Posterior vena cava (tissue), 2 donors: ENCODE measurements at regions of chr18 and their contacts with region 1.

Region 1: GRCh38 chr18:48951448-48952286 is 902 bp upstream of the SMAD7 start:
- DNase-seq: peak; percentile 95

Region 2: GRCh38 chr18:48675352-48675761 is 276.3 kb before region 1 on chr18:
- intact Hi-C with region 1: loop called (anchors 5 to 10 kb)
- DNase-seq: peak; percentile 96

Region 3: DNA sequence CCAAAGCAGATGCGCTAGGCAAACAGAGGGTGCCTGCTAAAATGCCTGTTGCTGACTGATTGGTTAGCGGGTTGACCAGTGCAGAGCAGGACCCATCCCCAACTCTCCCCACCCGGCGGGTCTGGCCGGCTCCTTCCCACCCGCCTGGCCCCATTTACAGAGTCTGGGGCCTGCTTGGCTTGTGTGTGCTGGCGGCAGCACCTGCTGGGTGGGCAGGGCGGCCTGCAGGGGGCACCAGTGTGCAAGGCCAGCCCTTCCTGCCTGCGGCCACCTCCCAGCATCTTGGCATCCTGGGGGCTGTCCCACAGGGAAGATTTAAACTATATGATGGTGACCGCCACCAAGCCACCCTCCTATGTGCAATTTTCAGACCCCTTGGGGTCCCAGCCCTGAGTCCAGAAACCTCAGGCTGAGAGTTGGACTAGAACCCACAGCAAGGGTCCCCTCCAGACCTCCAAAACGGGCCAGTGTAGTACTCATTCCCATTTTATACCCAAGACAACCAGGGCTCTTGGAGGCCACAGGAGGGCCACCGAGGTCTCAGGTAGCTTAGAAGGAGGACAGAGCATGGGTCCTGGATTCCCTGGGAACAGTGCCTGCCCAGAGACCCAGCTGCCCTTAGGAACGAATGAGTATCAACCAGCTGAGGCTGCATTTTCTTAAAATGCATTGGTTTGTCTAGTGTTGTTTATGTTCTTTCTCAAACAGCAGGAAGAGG is 174.5 kb before region 1 on chr18:
- intact Hi-C with region 1: loop called (anchors 5 to 10 kb)
- DNase-seq: peak; percentile 88

Region 4: DNA sequence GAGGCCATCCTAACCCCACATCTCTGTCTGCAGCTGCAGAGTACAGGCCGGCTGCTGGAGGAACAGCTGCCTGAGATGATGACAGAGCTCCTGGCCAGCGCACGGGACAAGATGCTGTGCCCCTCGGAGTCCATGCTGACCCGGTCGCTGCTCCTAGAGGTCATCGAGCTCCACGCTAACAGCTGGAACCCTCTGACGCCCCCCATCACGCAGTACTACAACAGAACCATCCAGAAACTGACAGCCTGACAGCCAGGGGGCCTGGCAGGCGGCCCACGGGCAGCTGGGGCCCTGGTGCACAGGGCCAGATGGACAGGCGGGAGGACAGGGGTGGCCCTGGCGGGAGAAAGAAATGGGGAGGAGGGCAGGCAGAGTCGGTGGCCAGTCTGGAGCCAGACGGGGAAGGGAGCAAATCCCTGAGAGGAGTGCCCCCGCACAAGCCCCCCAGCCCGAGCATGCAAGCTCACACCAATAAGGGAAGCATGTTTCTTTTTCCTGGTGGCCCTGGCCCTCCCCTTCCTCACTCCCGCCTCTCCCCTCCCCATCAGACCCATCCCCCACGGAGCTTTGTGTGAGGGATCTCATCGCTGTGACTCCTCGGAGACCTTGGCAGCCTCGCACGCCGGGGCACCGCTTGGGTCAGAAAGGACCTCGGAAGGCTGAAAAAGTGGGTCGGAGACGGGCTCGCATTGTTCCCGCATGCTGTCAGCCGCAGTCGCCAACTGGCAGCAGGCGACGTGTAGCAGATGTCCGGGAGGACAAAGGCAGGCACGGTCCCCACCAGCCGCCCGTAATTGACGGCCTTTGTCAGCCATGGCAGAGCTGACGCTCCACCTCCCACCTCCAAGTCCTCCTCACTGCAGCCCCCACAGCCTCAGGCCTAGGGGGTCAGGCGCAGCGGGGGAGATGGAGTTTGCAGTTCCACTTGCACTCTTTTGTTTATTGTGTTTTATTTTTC is 92.1 kb before region 1 on chr18:
- intact Hi-C with region 1: loop called in 1 of 2 experiments (anchors 5 kb)
- DNase-seq: peak; percentile 84

Region 5: DNA sequence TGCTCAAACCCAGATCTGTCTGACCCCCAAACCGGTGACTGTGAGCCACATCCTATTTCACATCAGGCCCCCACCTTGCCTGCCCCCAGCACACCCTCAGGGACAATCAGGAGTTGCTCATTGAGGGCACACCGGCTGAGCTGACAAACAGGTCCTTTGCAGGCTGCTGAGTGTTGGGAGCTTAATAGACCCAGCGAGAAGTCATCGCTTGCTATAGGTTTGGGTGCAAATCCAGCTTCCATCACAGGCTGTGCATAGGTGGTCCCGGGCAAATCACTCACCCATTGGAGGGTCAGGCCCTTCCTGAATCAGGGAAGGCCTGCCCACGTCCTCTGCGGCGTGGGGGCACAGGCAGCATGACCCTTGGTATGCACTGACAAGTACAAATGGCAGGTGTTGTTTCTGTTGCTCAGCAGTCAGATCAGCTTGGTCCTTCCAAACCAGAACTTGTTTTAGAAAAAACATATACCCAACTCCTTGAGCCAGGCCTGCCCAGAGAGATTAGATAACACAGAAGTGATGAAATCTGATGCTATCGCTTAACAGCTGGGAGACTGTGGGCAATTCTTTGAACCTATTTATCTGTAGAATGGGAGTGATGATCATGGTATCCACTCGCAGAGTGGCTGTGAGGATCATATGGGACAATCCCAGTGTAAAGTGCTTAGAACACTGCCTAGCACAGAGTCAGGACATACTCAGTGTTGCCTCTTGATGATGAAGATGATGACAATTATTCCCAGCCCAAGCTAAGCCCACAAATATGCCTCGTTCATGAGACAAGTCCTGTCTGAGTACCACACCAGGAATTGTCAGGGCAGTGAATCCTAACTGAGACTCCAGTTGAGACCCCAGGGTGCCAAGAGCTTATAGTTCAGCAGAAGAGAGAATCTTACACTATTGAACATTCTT is 35.8 kb before region 1 on chr18:
- intact Hi-C with region 1: no loop called
- DNase-seq: peak; percentile 47

Region 6: DNA sequence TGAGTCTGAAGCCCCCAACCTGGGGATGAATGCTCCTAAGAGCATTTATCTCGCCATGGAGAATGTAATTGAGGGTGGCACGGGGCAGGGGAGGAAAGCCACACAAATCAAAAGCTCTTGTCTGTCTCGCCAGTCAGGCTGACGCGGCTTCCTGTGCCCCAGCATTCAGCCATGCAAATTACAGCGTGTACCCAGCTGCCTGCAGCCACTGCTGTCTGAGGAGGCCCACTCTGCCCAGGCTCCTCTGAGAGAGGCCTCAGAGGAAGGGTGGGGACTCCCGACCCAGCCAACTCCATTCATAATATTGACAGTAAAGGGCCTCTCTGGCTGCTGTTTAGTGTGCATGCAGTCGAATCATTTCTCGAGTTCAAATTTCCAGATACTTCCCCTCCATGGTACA is 22.9 kb before region 1 on chr18:
- intact Hi-C with region 1: no loop called
- DNase-seq: no peak

Region 7: DNA sequence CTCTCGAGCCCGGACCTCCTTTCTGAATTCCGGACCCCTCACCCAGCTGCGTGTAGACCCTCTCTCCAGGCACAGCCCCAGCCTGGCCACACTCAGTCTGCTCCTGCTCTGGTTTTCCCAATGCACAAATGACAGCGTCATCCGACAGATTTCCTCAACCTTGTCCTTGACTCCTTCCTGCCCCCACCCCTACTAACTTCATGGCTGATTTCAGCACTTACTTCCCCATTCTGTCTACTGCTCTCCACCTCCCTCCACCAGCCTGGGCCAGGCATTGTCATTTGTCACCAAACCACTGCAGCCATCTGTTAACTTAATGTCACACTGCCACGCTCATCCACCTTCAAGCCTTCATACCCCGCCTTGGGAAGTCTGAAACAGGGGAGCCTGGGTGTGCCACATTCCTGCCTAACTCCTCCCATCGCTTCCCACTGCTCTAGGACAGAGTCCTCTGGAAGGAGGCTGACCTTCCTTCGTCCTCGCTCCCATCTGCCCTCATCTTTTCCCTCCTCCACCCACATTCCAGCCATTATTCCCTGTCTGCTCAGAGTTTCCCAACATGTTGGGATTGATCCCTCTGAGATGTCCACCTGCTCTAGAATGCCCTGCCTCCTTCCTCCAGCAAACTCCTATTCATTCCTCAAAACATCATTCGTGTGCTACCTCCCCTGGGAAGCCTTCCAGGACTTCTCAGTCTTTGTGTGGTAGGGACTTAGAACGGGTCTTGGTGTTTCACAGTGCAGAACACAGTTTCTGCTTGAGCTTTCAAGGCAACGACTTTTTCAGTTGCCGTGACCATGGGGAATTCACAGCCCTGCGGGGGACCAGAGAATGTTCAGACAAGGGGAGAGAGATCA is 41.3 kb after region 1 on chr18:
- intact Hi-C with region 1: loop called in 1 of 2 experiments (anchors 5 kb)
- DNase-seq: peak; percentile 64

Region 8: GRCh38 chr18:49048396-49049020 is 96.8 kb after region 1 on chr18:
- intact Hi-C with region 1: loop called in 1 of 2 experiments (anchors 5 kb)
- DNase-seq: no peak

Region 9: DNA sequence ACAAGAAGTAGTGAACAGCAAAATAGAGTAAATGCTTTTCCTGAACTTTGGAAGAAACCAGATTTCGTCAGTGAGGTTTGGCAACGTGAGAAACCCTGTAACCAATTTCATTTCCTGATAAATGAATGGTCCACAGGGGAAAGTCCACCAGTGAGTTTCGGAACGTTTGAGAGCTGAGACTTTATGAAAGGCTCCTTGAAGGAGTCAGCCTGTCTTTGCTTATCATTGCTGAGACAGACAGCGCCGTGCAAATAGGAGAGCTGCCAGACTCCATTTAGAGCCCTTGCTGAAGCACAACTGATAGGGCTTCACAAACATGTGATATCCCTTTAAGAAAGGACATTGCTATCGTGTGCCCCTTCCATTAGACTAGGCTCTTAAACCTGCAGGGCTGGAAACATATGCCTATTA is 120.9 kb after region 1 on chr18:
- intact Hi-C with region 1: no loop called
- DNase-seq: no peak

Region 10: GRCh38 chr18:49178736-49179135 is 227.1 kb after region 1 on chr18:
- intact Hi-C with region 1: loop called in 1 of 2 experiments (anchors 10 kb)
- DNase-seq: no peak